CD8-positive, alpha-beta T cell (primary cell): ENCODE measurements at regions of chr14 and their contacts with region 1.

Region 1: GRCh38 chr14:21846227-21846885 is 172.7 kb upstream of the OR4E1 start:
- DNase-seq: peak; percentile 32 to 78 (median 65)
- ATAC-seq: peak; percentile 83
- H3K4me3 ChIP-seq: peak overlapping the region; percentile 4 to 44
- H3K4me3 Mint-ChIP-seq: peak overlapping the region; percentile 86
- H3K27ac ChIP-seq: peak overlapping the region in 1 of 2 experiments; percentile 25
- H3K27ac Mint-ChIP-seq: peak overlapping the region; percentile 87
- H3K4me1 ChIP-seq: no peaks in the 10 kb centered on the region
- H3K4me1 Mint-ChIP-seq: peaks cover 7% of the 10 kb centered on the region
- H3K27me3 ChIP-seq: no peaks in the 10 kb centered on the region
- H3K27me3 Mint-ChIP-seq: peaks cover 18% of the 10 kb centered on the region
- CTCF ChIP-seq: peak; percentile 75

Region 2: GRCh38 chr14:20167091-20167490 is 1679.3 kb before region 1 on chr14:
- CTCF ChIA-PET with region 1: no interaction called
- POLR2A ChIA-PET with region 1: no interaction called
- intact Hi-C with region 1: no loop called
- DNase-seq: no peak
- ATAC-seq: no peak
- H3K4me3 ChIP-seq: no peak overlapping the region
- H3K4me3 Mint-ChIP-seq: no peak overlapping the region
- H3K27ac ChIP-seq: no peak overlapping the region
- H3K27ac Mint-ChIP-seq: no peak overlapping the region
- H3K4me1 ChIP-seq: no peaks in the 10 kb centered on the region
- H3K4me1 Mint-ChIP-seq: no peaks in the 10 kb centered on the region
- H3K27me3 ChIP-seq: no peaks in the 10 kb centered on the region
- H3K27me3 Mint-ChIP-seq: peaks cover 11% of the 10 kb centered on the region
- CTCF ChIP-seq: no peak

Region 3: DNA sequence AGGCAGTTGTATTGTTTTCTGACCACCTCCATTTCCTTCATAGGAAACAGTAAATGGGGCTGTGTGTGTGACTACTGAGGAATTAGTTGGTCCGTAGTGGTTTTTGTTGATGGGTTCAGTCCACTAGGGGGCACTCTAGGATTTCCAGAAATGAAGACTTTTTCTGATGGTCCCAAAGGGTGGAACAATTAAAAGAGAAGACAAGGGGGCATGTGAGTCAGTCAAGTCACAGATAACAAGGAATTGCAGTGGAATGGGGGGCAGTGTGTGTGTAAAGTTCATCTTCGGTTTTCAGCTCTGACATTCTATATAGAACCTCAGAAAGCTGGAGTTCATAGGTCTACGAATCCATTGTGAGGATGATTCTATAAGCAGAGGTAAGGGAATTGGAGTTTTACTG is 13.8 kb after region 1 on chr14:
- CTCF ChIA-PET with region 1: interaction called, 36 read pairs
- POLR2A ChIA-PET with region 1: interaction called, 4 read pairs
- intact Hi-C with region 1: no loop called
- DNase-seq: peak in 4 of 9 experiments; percentile 33 to 73 (median 56)
- ATAC-seq: peak; percentile 60
- H3K4me3 ChIP-seq: no peak overlapping the region
- H3K4me3 Mint-ChIP-seq: peak overlapping the region; percentile 48
- H3K27ac ChIP-seq: no peak overlapping the region
- H3K27ac Mint-ChIP-seq: peak overlapping the region; percentile 67
- H3K4me1 ChIP-seq: no peaks in the 10 kb centered on the region
- H3K4me1 Mint-ChIP-seq: peaks cover 12% of the 10 kb centered on the region
- H3K27me3 ChIP-seq: no peaks in the 10 kb centered on the region
- H3K27me3 Mint-ChIP-seq: peaks cover 2% of the 10 kb centered on the region
- CTCF ChIP-seq: no peak

Region 4: GRCh38 chr14:21882226-21882625 is 35.9 kb after region 1 on chr14:
- CTCF ChIA-PET with region 1: interaction called, 4 read pairs
- POLR2A ChIA-PET with region 1: no interaction called
- intact Hi-C with region 1: loop called in 1 of 2 experiments (anchors 1 kb)
- DNase-seq: no peak
- ATAC-seq: no peak
- H3K4me3 ChIP-seq: no peak overlapping the region
- H3K4me3 Mint-ChIP-seq: no peak overlapping the region
- H3K27ac ChIP-seq: no peak overlapping the region
- H3K27ac Mint-ChIP-seq: no peak overlapping the region
- H3K4me1 ChIP-seq: no peaks in the 10 kb centered on the region
- H3K4me1 Mint-ChIP-seq: peaks cover 9% of the 10 kb centered on the region
- H3K27me3 ChIP-seq: no peaks in the 10 kb centered on the region
- H3K27me3 Mint-ChIP-seq: no peaks in the 10 kb centered on the region
- CTCF ChIP-seq: no peak

Region 5: GRCh38 chr14:22026527-22026926 is 180.2 kb after region 1 on chr14:
- CTCF ChIA-PET with region 1: no interaction called
- POLR2A ChIA-PET with region 1: no interaction called
- intact Hi-C with region 1: no loop called
- DNase-seq: no peak
- ATAC-seq: no peak
- H3K4me3 ChIP-seq: no peak overlapping the region
- H3K4me3 Mint-ChIP-seq: no peak overlapping the region
- H3K27ac ChIP-seq: no peak overlapping the region
- H3K27ac Mint-ChIP-seq: no peak overlapping the region
- H3K4me1 ChIP-seq: no peaks in the 10 kb centered on the region
- H3K4me1 Mint-ChIP-seq: peaks cover 6% of the 10 kb centered on the region
- H3K27me3 ChIP-seq: no peaks in the 10 kb centered on the region
- H3K27me3 Mint-ChIP-seq: peaks cover 3% of the 10 kb centered on the region
- CTCF ChIP-seq: no peak

Region 6: DNA sequence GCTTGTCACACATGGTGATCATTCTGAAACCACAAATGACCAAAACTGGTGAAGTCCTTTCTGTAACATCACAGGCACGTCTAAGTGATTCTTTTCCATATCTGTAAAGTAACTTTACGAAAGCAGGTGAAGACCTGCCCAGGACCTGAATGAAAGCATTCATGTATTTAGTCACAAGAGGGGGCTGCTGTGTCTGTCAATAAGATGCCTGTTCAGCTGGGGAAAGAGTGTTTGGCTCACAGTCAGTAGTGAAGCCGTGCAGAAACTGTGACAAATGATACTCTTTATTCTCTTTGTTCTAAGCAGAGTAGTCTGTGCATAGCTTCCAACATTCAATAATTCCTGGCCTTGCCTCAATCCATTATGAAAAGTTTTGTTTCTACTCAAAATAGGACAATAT is 200.8 kb after region 1 on chr14:
- CTCF ChIA-PET with region 1: no interaction called
- POLR2A ChIA-PET with region 1: no interaction called
- intact Hi-C with region 1: no loop called
- DNase-seq: peak in 5 of 9 experiments; percentile 19 to 77 (median 38)
- ATAC-seq: peak; percentile 90
- H3K4me3 ChIP-seq: no peak overlapping the region
- H3K4me3 Mint-ChIP-seq: peak overlapping the region; percentile 58
- H3K27ac ChIP-seq: peak overlapping the region; percentile 15 to 19
- H3K27ac Mint-ChIP-seq: peak overlapping the region; percentile 92
- H3K4me1 ChIP-seq: peaks cover 14% of the 10 kb centered on the region
- H3K4me1 Mint-ChIP-seq: peaks cover 44% of the 10 kb centered on the region
- H3K27me3 ChIP-seq: no peaks in the 10 kb centered on the region
- H3K27me3 Mint-ChIP-seq: no peaks in the 10 kb centered on the region
- CTCF ChIP-seq: peak; percentile 35